ENCODE measurements at regions of chr6 and their contacts with region 1.

Region 1: GRCh38 chr6:40727271-40727670 is 140.1 kb upstream of the LRFN2 start:
- DNase-seq: no peak
- H3K4me3 ChIP-seq: no peak overlapping the region
- H3K27ac ChIP-seq: no peak overlapping the region
- H3K4me1 ChIP-seq: peaks cover 0 to 6% (median 4%) of the 10 kb centered on the region in 4 experiments; a peak in 6 of 7 replicates
- H3K27me3 ChIP-seq: no peaks in the 10 kb centered on the region
- CTCF ChIP-seq: peak in 2 of 3 experiments; percentile 52 to 65; a peak in 2 of 4 replicates
- EP300 ChIP-seq: no peak
- POLR2A ChIP-seq: no peak
- RAD21 ChIP-seq: peak in 1 of 2 experiments; percentile 34; a peak in 1 of 4 replicates

Region 2: GRCh38 chr6:40738551-40739193 is 11.4 kb after region 1 on chr6:
- CTCF ChIA-PET with region 1: interaction called, 11 read pairs
- POLR2A ChIA-PET with region 1: interaction called, 4 read pairs
- DNase-seq: no peak
- H3K4me3 ChIP-seq: no peak overlapping the region
- H3K27ac ChIP-seq: no peak overlapping the region
- H3K4me1 ChIP-seq: peaks cover 0 to 3% (median 0%) of the 10 kb centered on the region in 4 experiments; a peak in 1 of 7 replicates
- H3K27me3 ChIP-seq: 0 out of 7 replicates have a peak, but pooled peaks cover 0 to 4% (median 0%) of the 10 kb centered on the region in 4 experiments
- CTCF ChIP-seq: no peak
- EP300 ChIP-seq: no peak
- POLR2A ChIP-seq: no peak
- RAD21 ChIP-seq: no peak

Measured in H1 (cell line).